ENCODE measurements at regions of chr2 and their contacts with region 1.

Region 1: DNA sequence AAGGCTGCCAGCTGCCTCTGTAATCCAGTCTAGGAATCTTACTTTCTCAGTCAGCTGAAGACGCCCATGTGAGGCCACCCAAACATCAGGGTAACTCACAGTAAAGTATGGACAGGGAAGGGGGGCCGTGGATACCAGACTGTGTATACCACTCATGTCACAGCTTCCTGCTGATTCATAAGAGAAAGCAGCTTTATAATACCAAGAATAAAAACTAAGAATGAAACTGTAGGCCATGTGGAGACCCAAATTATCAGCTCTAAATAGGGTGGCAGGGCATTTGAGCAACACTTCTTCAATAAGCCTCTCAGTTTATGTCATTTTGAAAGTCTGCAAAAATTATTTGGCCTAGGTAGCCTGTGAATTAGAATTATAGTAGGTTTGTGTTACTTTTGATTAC is 115.0 kb upstream of the CDCA7 start:
- DNase-seq: no peak
- H3K4me3 ChIP-seq: no peak overlapping the region
- H3K27ac ChIP-seq: no peak overlapping the region
- H3K4me1 ChIP-seq: no peaks in the 10 kb centered on the region
- H3K27me3 ChIP-seq: no peaks in the 10 kb centered on the region
- CTCF ChIP-seq: no peak
- POLR2A ChIP-seq: no peak

Region 2: DNA sequence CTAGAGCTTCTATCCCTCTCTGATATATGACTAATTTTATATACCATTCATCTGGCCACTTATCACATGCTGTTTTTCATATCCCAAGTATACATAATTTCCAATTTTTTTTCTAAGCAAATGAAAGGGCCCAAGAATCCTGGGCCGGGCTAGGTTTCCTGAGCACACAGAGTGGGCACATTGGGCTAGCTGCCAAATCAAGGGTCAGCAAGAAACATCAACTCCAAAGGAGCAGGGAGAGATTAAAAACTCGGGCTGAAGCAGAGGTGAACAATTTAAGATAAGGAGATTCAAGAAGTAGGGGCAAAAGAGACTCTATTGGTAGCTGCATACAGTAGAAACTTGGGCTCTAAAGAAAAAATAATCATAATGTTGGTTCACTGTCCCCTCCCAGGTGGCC is 969.7 kb after region 1 on chr2:
- intact Hi-C with region 1: loop called (anchors 10 kb)
- DNase-seq: no peak
- H3K4me3 ChIP-seq: no peak overlapping the region
- H3K27ac ChIP-seq: no peak overlapping the region
- H3K4me1 ChIP-seq: no peaks in the 10 kb centered on the region
- H3K27me3 ChIP-seq: no peaks in the 10 kb centered on the region
- CTCF ChIP-seq: no peak
- POLR2A ChIP-seq: no peak